Thyroid gland (tissue), 4 donors: ENCODE measurements at regions of chr19 and their contacts with region 1.

Region 1: GRCh38 chr19:48588670-48589399 is 17.7 kb upstream of the SPACA4 start:
- DNase-seq: peak; percentile 91 to 93
- H3K4me3 ChIP-seq: peak overlapping the region in 1 of 3 donors; percentile 24
- H3K27ac ChIP-seq: no peak overlapping the region
- H3K4me1 ChIP-seq: peaks cover 0 to 6% of the 10 kb centered on the region in 2 donors
- H3K27me3 ChIP-seq: no peaks in the 10 kb centered on the region
- CTCF ChIP-seq: peak; percentile 66 to 96 (median 92)
- POLR2A ChIP-seq: no peak

Region 2: DNA sequence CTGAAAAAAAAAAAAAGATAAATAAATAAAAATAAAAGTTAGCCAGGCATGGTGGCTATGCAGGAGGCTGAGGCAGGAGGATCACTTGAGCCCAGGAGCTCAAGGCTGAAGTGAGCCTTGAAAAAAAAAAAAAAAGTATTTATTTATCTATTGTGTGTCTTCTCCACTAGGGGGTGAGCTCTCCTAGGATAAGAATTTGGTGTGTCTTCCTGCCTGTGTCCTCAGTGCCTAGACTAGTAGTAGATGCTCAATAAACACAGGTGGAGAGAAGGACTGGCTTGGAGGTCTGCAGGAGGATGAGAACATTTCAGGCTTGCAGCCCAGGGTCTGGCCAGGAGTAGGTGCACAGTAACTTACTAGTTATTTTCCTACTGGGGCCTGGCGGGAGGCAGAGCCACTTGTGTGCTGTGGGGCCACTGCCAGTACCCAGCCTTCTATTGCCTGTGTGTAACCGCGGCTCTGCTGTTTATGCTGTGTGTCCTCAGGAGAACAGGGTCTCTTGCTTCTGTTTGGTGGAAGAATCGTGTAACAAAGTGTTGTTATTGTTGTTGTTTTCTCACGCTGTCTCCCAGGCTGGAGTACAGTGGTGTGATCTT is 82.6 kb before region 1 on chr19:
- intact Hi-C with region 1: loop called (anchors 5 kb)
- DNase-seq: no peak
- H3K4me3 ChIP-seq: no peak overlapping the region
- H3K27ac ChIP-seq: no peak overlapping the region
- H3K4me1 ChIP-seq: peaks cover 3 to 16% of the 10 kb centered on the region in 2 donors
- H3K27me3 ChIP-seq: no peaks in the 10 kb centered on the region
- CTCF ChIP-seq: peak in 5 of 6 experiments; percentile 16 to 70 (median 46)
- POLR2A ChIP-seq: no peak